Sigmoid colon (tissue), 7 donors: ENCODE measurements at regions of chr4 and their contacts with region 1.

Region 1: GRCh38 chr4:184649026-184649970 is at the starts of genes CASP3 and PRIMPOL:
- DNase-seq: peak; percentile 98
- H3K4me3 ChIP-seq: peak within 1 kb of the TSS; percentile 78 to 87 (median 86)
- H3K27ac ChIP-seq: peak within 1 kb of the TSS; percentile 94 to 100 (median 97)
- H3K4me1 ChIP-seq: peaks cover 0 to 49% (median 34%) of the 10 kb centered on the region in 4 donors
- H3K27me3 ChIP-seq: no peaks in the 10 kb centered on the region
- CTCF ChIP-seq: peak in 1 of 4 experiments; percentile 17
- EP300 ChIP-seq: no peak
- POLR2A ChIP-seq: peak; percentile 82 to 83
- total RNA-seq, gene CASP3: 9.4 to 20.3 (median 17.7) TPM
- total RNA-seq, gene PRIMPOL: 18.7 to 32.1 (median 29.9) TPM

Region 2: DNA sequence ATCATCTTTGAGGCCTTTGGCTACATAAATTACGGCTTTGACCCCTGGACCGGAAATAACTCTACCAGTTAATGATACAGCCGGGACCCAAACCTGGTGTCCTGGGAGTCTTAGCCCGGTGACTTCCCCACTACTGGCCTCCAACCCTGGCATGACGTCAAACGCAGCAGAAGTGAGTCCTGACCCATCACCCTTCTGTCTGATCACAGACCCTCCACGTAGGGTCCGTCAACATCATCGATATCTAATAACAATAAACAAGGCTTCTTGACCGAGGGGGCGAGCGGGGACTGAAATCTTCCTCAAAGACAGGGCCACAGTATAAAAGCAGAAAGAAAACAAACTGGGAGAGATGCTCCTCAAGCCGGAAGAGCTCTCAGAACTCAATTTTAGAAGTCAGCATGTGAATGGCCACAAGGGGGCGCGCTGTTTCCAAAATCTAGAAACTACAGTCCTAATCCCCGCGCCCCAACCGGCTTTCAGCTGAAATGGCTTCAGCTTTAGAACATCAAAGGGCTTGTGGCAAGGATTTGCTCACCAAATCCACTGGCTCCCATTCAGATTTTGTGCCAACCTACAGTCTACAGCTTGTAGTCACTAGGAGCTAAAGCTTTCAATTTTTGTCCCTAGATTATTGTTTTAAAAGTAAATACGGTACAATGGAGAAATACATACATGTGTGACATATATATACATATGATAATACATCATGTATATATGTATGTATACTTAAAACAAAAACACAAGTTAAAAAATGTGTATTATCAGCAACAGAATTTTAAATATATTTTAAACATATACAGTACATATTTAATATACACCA is 385.2 kb before region 1 on chr4:
- intact Hi-C with region 1: loop called (anchors 1 kb)
- DNase-seq: peak; percentile 96
- H3K4me3 ChIP-seq: no peak overlapping the region
- H3K27ac ChIP-seq: peak overlapping the region in 1 of 4 donors; percentile 5
- H3K4me1 ChIP-seq: peaks cover 0 to 8% (median 0%) of the 10 kb centered on the region in 4 donors
- H3K27me3 ChIP-seq: no peaks in the 10 kb centered on the region
- CTCF ChIP-seq: peak; percentile 72 to 94 (median 90)
- EP300 ChIP-seq: no peak
- POLR2A ChIP-seq: no peak

Region 3: DNA sequence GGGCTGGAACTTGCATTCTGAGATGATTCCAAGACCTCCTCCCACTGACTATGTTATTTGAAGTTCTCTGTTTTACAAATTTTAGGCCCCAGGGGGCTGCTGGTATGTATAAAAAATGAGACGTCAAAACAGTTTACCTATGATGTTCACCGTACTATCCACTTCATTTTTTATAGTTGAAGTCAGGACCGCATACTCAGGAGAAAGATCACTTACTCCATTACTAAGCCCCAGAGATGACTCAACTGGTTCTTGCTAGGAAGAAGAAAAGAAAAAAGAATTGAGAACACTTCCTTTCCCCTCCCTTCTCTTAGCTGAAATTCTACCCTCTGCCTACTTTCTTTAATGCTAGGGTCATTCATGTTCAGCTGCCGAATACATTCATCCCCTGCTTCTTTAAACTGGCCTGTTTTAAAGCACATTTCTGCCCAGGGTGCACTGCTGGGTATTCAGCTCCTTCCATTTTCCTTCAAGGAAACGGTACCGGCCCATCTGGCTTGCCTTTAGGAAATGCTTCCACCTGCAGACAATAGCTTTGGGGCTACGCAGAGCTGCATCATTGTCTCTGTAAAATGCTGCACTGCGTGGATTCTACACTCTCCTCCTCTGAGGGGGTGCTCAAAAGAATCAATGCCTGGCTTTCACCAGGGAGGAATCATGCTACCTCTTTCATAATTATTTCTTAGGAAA is 241.1 kb before region 1 on chr4:
- intact Hi-C with region 1: no loop called
- DNase-seq: no peak
- H3K4me3 ChIP-seq: no peak overlapping the region
- H3K27ac ChIP-seq: peak overlapping the region; percentile 10 to 55 (median 24)
- H3K4me1 ChIP-seq: peaks cover 0 to 17% (median 0%) of the 10 kb centered on the region in 4 donors
- H3K27me3 ChIP-seq: no peaks in the 10 kb centered on the region
- CTCF ChIP-seq: no peak
- EP300 ChIP-seq: no peak
- POLR2A ChIP-seq: no peak

Region 4: DNA sequence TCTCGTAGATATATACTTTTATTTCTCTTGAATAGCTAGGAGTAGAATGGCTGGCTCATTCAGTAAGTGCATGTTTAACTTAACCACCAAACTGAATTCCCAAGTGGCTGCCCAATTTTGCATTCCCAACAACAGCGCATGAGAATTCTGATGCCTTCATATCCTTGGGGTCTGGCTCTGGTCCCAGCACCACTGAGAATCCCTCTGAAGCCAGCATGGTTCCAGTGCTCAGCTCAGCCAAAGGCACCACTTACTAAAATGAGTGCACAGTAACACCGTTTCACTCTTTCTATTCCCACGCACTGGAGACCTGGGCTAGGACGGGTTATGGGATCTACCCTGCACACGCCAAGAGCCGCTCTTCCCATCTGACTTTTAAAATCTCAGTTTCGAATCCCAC is 60.4 kb before region 1 on chr4:
- intact Hi-C with region 1: no loop called
- DNase-seq: no peak
- H3K4me3 ChIP-seq: no peak overlapping the region
- H3K27ac ChIP-seq: no peak overlapping the region
- H3K4me1 ChIP-seq: no peaks in the 10 kb centered on the region
- H3K27me3 ChIP-seq: no peaks in the 10 kb centered on the region
- CTCF ChIP-seq: no peak
- EP300 ChIP-seq: no peak
- POLR2A ChIP-seq: no peak

Region 5: DNA sequence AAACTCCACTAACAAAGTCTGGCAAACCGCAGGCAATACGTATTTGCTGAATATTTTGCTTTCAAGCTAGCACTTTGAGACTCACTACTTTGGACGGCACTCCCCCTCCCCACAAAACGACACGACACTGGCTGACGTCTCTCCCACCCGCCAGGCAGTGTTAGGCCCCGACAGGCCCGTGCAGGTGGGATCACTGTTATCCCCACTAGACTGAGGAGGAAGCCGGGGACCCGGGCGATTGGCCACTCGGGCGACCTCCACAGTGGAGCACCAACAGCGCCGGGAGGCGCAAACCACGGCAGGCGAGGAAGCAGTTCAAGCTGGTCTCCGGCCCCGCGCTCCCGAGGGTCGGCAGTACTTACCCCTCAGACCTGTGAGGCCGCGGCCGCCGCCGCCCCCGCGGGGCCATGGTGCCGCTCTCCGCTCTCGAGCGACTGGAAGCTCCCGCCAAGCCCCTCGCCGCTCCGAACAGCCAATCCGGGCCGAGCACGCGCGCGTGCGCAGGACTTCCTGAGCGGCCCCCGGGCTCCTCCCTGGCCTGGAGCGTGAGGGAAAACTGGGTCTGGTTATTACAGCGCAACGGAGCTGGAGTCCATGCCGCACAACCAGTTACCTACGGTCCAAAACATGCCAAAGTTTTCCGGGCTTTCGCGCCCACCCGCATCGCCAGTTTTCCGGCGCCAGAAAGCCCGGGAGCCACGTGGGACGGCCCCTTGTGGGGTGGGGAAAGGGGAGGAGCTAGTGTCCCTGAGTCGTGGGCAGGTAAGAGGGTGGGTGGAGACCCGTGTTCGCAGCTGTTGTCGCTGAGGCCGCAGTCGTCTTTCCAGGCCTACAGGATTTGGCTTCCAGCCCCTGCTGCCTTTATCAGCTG is 84.6 kb after region 1 on chr4 and contains the start of gene CENPU:
- intact Hi-C with region 1: loop called (anchors 2 kb)
- DNase-seq: peak; percentile 97
- H3K4me3 ChIP-seq: peak within 1 kb of the TSS; percentile 32 to 74 (median 58)
- H3K27ac ChIP-seq: peak within 1 kb of the TSS; percentile 63 to 72 (median 68)
- H3K4me1 ChIP-seq: peaks cover 3 to 17% (median 11%) of the 10 kb centered on the region in 4 donors
- H3K27me3 ChIP-seq: no peaks in the 10 kb centered on the region
- CTCF ChIP-seq: no peak
- EP300 ChIP-seq: peak in 1 of 4 donors; percentile 62
- POLR2A ChIP-seq: no peak
- total RNA-seq, gene CENPU: 0.95 to 1.4 (median 1.3) TPM in 3 of 4 donors, not detected in the other

Region 6: GRCh38 chr4:184815046-184815877 is 166.0 kb after region 1 on chr4:
- intact Hi-C with region 1: no loop called
- DNase-seq: peak; percentile 89
- H3K4me3 ChIP-seq: no peak overlapping the region
- H3K27ac ChIP-seq: peak overlapping the region; percentile 32 to 62 (median 60)
- H3K4me1 ChIP-seq: peaks cover 0 to 23% (median 22%) of the 10 kb centered on the region in 4 donors
- H3K27me3 ChIP-seq: no peaks in the 10 kb centered on the region
- CTCF ChIP-seq: no peak
- EP300 ChIP-seq: no peak
- POLR2A ChIP-seq: no peak

Region 7: DNA sequence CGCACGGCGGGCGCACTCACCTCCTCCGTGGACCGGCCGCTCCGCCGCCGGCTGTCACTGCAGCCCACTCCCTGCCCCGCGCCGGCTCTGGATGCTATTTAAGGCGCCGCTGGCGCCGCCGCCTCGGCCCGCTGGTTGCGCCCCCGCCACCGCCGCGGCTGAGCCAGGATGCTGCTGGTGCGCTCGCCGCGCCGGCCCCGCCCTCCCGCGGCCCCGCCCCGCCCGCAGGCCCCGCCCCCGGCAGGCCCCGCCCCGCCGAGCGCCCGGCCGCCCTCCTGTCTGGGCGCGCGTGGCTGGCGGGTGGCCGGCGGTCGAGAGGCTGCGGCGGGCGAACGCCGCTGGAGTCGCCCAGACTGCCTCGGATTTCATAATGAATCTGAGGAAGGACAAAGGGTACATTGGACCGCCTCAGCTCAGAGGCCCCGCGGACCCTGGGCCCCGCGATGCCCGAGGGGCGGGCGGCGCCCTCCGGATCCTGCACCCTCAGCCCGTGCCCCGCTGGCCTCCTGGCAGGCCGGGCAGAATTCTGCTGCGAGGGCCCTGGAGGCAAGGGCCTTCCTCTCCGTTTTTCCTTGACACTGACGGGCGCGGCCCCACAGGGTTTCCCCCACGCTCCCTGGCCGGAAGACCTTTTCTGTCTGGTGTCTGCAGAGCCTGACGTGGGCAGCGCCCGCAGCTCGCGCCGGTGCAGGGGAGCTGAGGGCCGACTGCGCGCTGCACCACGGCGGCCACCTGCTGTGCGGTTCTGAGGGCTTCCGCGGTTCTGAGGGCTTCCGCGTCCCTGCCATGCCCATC is 176.8 kb after region 1 on chr4 and contains the start of gene ACSL1:
- intact Hi-C with region 1: loop called (anchors 2 kb)
- DNase-seq: peak; percentile 90
- H3K4me3 ChIP-seq: peak within 1 kb of the TSS; percentile 46 to 88 (median 65)
- H3K27ac ChIP-seq: peak within 1 kb of the TSS; percentile 80 to 91 (median 84)
- H3K4me1 ChIP-seq: peaks cover 0 to 22% (median 10%) of the 10 kb centered on the region in 4 donors
- H3K27me3 ChIP-seq: no peaks in the 10 kb centered on the region
- CTCF ChIP-seq: no peak
- EP300 ChIP-seq: no peak
- POLR2A ChIP-seq: no peak
- total RNA-seq, gene ACSL1: 37.8 to 118 (median 72.3) TPM

Region 8: GRCh38 chr4:184889666-184890335 is 240.5 kb after region 1 on chr4:
- intact Hi-C with region 1: no loop called
- DNase-seq: no peak
- H3K4me3 ChIP-seq: no peak overlapping the region
- H3K27ac ChIP-seq: no peak overlapping the region
- H3K4me1 ChIP-seq: no peaks in the 10 kb centered on the region
- H3K27me3 ChIP-seq: no peaks in the 10 kb centered on the region
- CTCF ChIP-seq: no peak
- EP300 ChIP-seq: no peak
- POLR2A ChIP-seq: no peak